ENCODE measurements at regions of chr12 and their contacts with region 1.

Region 1: DNA sequence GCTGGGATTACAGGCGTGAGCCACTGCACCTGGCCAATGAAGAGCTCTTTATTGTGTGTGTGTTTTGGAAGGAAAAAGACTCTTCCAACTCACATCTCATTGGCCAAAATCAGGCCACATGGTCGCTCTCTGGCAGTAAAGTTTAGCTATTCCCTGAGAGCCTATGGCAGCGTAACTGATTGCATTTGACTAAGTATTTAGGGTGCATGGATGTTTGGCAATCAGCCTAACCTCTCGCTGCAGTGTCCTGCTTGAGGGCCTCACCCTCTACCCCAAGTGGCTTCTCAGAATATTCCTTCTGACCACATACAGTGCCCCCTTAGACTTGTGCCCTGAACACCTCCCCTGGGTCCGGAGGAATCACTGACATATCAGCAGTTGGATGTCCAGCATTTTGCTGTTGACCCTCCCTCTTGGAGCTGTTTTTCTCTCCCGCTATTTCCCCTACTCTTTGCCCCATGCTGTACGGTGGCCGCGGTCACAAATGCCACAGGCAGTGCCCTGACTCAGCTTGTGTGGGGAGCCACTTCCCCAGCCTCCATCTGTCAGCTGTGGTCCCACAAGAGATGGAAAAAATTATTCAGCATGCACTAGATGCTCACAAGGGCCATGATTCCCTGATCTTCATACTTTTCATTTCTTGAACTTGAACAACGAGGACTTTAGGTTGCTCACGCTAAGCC is 9.5 kb downstream of the PHETA1 start:
- DNase-seq: no peak
- H3K4me3 ChIP-seq: no peak overlapping the region
- H3K27ac ChIP-seq: no peak overlapping the region
- H3K4me1 ChIP-seq: no peaks in the 10 kb centered on the region
- H3K27me3 ChIP-seq: no peaks in the 10 kb centered on the region
- CTCF ChIP-seq: no peak
- EP300 ChIP-seq: no peak
- POLR2A ChIP-seq: no peak
- RAD21 ChIP-seq: no peak

Region 2: DNA sequence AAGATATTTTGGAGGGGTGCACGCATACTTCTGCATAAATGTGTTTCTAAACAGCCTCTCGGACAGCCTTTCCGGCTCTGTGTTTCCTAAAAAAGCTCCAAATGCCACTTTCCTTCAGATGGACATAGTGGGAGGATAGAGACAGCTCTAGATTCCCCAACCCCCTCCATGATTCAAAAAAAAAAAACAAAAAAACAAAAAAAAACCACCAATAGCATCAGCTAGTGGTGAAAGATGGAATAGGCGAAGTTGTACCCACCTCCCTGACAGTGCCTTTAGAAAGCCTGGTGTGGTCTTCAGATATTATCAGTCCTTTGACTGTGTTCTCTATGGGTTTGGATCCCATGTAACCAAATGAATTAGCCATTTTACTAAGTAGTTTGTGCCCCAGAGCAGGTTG is 84.6 kb before region 1 on chr12:
- CTCF ChIA-PET with region 1: no interaction called
- POLR2A ChIA-PET with region 1: no interaction called
- DNase-seq: no peak
- H3K4me3 ChIP-seq: no peak overlapping the region
- H3K27ac ChIP-seq: no peak overlapping the region
- H3K4me1 ChIP-seq: no peaks in the 10 kb centered on the region
- H3K27me3 ChIP-seq: no peaks in the 10 kb centered on the region
- CTCF ChIP-seq: peak in 2 of 3 experiments; percentile 31 to 68; a peak in 2 of 4 replicates
- EP300 ChIP-seq: no peak
- POLR2A ChIP-seq: no peak
- RAD21 ChIP-seq: peak; percentile 21 to 27; a peak in 2 of 4 replicates

Region 3: DNA sequence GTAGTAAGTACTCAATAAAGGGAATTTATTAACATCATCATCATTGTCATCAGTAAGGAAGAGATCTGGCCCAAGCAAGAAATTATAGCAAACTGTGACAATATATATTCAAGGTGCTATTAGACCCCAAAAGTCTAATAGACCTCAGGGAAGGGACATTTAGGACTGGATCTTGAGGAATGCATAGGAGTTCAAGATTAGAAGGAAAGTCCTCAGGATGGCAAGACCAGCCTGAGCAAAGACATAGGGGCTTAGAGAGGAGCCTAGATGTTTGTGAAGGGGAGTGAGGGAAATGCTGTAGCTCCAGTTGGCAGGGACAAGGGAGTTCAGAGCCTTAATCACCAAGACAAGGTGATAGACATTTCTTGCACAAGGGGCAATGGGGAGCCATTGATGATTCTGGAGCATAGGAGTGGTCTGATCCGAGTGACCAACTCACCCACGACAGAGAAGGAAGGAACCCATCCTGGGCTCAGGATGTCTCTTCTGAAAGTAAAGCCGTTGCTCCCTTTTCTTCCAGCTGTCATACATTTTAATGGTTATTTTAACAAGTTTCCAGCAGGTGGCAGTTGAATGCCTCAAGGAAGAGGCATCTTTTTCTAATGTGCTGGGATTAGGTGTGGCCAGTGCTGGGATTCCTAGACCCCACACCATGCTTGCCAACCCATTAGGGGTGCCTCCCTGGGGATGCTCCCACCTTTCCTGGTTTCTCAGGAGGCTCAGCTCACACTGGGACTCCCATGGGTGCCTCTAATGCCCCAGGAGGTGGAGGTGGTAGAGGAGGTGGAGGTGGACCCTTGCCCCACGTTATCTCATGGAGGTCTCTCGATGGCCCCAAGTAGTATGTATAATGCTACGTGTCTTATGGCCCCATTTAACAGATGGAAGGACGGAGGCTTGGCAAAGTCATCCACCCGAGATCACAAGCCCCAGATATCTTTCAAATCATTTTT is 28.3 kb before region 1 on chr12:
- CTCF ChIA-PET with region 1: interaction called, 11 read pairs
- POLR2A ChIA-PET with region 1: no interaction called
- DNase-seq: no peak
- H3K4me3 ChIP-seq: no peak overlapping the region
- H3K27ac ChIP-seq: no peak overlapping the region
- H3K4me1 ChIP-seq: peaks cover 0 to 2% (median 0%) of the 10 kb centered on the region in 4 experiments; a peak in 1 of 7 replicates
- H3K27me3 ChIP-seq: no peaks in the 10 kb centered on the region
- CTCF ChIP-seq: peak in 2 of 3 experiments; percentile 53 to 59; a peak in 3 of 4 replicates
- EP300 ChIP-seq: no peak
- POLR2A ChIP-seq: no peak
- RAD21 ChIP-seq: peak; percentile 60 to 71

Region 4: DNA sequence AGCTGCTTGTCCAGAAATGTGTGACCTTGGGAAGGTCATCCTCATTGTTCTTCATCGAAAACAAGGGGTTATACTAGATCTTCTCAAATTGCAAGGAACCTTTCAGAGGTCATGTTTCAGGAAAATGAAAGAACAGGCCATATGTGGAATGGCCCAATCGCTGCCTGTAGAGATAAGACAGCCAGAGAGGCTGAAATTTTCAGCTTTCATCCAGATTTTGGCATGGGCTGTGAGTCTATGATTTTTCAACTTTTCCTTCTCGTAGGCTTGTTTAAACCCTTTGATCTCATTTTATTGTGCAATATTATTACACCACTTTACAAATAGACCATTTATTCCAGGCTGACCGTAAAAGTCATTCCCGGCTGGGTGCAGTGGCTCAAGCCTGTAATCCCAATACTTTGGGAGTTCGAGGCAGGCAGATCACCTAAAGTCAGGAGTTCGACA is 256.8 kb after region 1 on chr12:
- CTCF ChIA-PET with region 1: no interaction called
- POLR2A ChIA-PET with region 1: no interaction called
- DNase-seq: no peak
- H3K4me3 ChIP-seq: no peak overlapping the region
- H3K27ac ChIP-seq: no peak overlapping the region
- H3K4me1 ChIP-seq: no peaks in the 10 kb centered on the region
- H3K27me3 ChIP-seq: no peaks in the 10 kb centered on the region
- CTCF ChIP-seq: no peak
- EP300 ChIP-seq: no peak
- POLR2A ChIP-seq: no peak
- RAD21 ChIP-seq: no peak